Heart right ventricle (tissue), 16 donors: ENCODE measurements at regions of chr6 and their contacts with region 1.

Region 1: GRCh38 chr6:9007062-9007461 is 571.7 kb upstream of the SLC35B3 start:
- DNase-seq: no peak
- ATAC-seq: no peak
- H3K4me3 ChIP-seq: no peak overlapping the region
- H3K27ac ChIP-seq: no peak overlapping the region
- H3K4me1 ChIP-seq: no peaks in the 10 kb centered on the region
- H3K27me3 ChIP-seq: no peaks in the 10 kb centered on the region
- CTCF ChIP-seq: no peak

Region 2: DNA sequence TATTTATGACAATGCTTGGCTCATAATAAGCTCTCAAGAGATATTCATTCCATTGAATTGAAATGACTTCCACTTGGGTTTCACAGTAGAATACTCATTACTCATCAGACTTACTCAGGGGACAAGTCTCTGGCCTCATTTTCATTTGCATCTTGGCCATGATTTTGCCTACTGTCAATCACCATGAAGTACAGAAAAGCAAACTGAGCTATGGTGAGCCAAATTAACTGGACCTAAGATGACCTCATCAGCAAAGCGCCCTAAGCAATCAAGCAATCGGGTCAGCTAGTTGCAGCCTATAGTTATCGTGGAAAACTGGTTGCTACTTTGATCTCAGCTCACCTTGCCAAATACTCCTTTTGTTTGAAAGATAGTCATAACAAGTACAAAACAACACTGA is 77.1 kb before region 1 on chr6:
- intact Hi-C with region 1: no loop called
- DNase-seq: no peak
- ATAC-seq: no peak
- H3K4me3 ChIP-seq: no peak overlapping the region
- H3K27ac ChIP-seq: no peak overlapping the region
- H3K4me1 ChIP-seq: no peaks in the 10 kb centered on the region
- H3K27me3 ChIP-seq: no peaks in the 10 kb centered on the region
- CTCF ChIP-seq: no peak

Region 3: GRCh38 chr6:8969747-8970146 is 37.3 kb before region 1 on chr6:
- intact Hi-C with region 1: loop called in 1 of 10 experiments (anchors 1 kb)
- DNase-seq: no peak
- ATAC-seq: no peak
- H3K4me3 ChIP-seq: no peak overlapping the region
- H3K27ac ChIP-seq: no peak overlapping the region
- H3K4me1 ChIP-seq: no peaks in the 10 kb centered on the region
- H3K27me3 ChIP-seq: no peaks in the 10 kb centered on the region
- CTCF ChIP-seq: no peak

Region 4: GRCh38 chr6:9056556-9056955 is 49.5 kb after region 1 on chr6:
- intact Hi-C with region 1: no loop called
- DNase-seq: no peak
- ATAC-seq: no peak
- H3K4me3 ChIP-seq: no peak overlapping the region
- H3K27ac ChIP-seq: no peak overlapping the region
- H3K4me1 ChIP-seq: no peaks in the 10 kb centered on the region
- H3K27me3 ChIP-seq: no peaks in the 10 kb centered on the region
- CTCF ChIP-seq: no peak